Cardiac septum (tissue), 1 donor: ENCODE measurements at regions of chr20 and their contacts with region 1.

Region 1: DNA sequence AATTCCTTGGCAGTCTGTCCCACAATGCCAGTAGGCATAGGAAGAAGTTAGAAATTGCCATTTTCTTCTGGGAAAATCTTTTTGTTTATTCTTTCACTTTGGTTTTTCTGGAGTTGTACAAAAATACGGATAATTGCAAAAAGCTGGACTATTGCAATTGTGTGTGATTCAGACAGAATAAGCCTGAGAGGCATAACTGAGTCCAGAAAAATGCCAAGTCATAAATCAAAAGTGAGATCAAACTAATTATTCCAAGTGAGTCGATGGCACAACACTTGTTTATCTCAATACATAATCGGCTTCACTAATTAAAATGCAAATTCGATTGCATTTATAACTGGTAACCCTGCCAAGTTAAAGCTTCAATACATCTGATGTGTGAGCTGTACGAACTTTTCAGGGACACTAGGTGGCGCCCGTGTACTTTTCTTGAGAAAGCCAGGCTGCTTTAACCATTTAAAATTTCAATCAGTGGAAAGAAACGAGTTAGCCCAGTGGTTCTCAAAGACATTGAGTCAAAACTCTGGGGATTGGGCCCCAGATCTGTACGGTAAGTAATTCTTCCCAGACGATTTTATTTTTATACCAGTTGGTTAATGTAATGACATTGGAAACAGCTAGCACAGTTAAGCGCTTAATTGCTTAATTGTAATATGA is 102.6 kb downstream of the LAMP5 start:
- DNase-seq: no peak

Region 2: GRCh38 chr20:9677100-9677623 is 60.2 kb after region 1 on chr20:
- intact Hi-C with region 1: no loop called
- DNase-seq: no peak

Region 3: DNA sequence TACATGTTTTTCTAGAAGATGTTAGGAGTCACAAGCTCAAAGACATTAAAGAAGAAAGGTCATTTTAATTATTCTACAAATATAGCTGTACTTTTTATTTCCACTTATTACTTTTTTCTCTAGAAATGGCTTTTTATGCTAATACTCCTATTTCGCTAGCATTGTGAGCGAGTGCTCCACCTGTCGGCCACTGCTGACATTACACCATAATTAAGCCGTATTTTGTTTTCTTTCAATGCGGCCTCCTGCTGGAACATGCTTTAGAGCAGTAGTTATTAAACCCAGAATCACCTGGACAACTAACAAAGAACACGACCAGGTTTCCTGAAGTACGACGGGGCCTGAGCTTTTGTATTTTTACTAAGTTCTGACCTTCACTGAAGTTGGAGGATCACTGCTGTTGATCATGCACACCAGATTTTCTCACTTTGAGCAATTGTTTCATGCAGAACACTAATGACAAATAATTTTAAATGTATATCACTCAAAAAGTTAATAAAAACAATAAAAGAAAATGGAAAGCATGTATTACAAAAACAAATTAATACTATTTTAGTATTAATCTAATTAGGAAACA is 296.0 kb after region 1 on chr20:
- intact Hi-C with region 1: loop called (anchors 5 kb)
- DNase-seq: no peak

Region 4: DNA sequence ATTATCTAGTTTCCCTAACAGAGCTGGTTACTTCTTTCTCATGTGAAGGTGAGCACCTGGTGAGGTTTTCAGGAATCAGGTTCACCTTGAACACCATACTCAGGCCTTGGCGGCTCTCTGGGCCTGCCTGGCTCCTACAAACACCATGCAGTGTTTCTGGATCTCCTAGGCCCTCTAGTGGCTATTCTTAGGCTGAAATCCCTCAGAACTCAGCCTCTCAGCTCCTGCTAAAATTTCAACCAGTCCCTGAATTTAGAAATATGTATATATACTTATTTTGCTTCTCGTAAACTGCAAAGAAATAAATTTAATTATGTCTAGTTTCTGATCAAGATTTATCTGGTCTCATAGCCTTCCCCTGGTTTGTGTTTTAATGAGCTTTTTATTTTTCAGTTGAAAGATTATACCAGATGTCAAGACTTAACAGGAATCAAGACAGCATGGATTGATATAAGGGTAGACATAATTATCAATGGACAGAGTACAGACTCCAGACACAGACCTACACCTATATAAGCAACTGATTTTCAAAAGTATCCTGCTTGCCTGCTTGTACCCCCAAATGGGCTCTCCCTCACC is 473.7 kb after region 1 on chr20:
- intact Hi-C with region 1: loop called (anchors 5 kb)
- DNase-seq: no peak

Region 5: GRCh38 chr20:10427060-10427692 is 810.2 kb after region 1 on chr20:
- intact Hi-C with region 1: loop called (anchors 10 kb)
- DNase-seq: no peak